ENCODE measurements at regions of chr17 and their contacts with region 1.

Region 1: DNA sequence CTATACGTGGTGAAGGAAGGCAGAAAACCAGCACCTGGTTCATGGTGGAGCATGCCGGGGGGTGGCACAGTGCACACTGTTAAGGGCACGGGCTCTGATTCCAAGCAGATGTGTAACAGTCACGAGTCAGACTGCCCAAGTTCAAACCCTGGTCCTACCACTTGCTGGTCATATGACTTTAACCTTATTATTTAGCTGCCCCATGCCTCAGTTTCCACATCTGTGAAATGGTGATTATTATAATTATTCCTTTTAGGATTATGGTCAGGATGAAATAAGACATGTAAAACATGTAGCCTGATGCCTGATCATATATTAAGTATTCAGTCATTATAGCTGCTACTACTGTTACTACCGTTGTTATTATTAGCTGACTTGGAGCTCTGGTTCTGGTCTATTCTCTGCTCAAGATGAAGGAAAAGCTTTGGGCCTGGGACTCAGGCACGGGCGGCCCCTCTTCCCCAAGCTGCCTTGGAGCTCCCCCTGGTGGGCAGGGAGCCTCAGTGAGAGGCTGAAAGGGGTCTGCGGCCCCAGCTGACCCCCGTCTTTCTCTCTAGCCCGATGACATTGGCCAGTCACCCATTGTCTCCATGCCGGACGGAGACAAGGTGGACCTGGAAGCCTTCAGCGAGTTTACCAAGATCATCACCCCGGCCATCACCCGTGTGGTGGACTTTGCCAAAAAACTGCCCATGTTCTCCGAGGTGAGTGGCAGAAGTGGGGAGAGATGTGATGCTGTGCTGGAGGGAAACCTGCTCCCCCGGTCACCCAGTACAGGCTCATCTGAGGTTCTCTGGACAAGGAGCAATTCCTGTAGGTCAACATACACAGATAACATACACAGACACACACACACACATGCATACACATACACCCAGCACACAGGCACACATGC is 14.0 kb downstream of the NR1D1 start:
- DNase-seq: peak; percentile 40
- H3K4me3 ChIP-seq: no peak overlapping the region
- H3K27ac ChIP-seq: no peak overlapping the region
- H3K4me1 ChIP-seq: no peaks in the 10 kb centered on the region
- H3K27me3 ChIP-seq: no peaks in the 10 kb centered on the region
- CTCF ChIP-seq: peak; percentile 80 to 89
- POLR2A ChIP-seq: no peak

Region 2: GRCh38 chr17:40015005-40015997 is 71.1 kb before region 1 on chr17 and contains the start of gene CSF3:
- CTCF ChIA-PET with region 1: interaction called, 15 read pairs
- POLR2A ChIA-PET with region 1: no interaction called
- dilution Hi-C with region 1: no loop called
- intact Hi-C with region 1: loop called (anchors 1 kb)
- DNase-seq: peak; percentile 31
- H3K4me3 ChIP-seq: peak within 1 kb of the TSS in 1 of 3 experiments; percentile 5
- H3K27ac ChIP-seq: peak within 1 kb of the TSS; percentile 88
- H3K4me1 ChIP-seq: peaks cover 56% of the 10 kb centered on the region
- H3K27me3 ChIP-seq: no peaks in the 10 kb centered on the region
- CTCF ChIP-seq: no peak
- POLR2A ChIP-seq: no peak
- total RNA-seq, gene CSF3: 2.4 and 2.9 TPM in 2 replicates

Region 3: GRCh38 chr17:40021451-40021971 is 64.9 kb before region 1 on chr17:
- CTCF ChIA-PET with region 1: interaction called, 15 read pairs
- POLR2A ChIA-PET with region 1: no interaction called
- dilution Hi-C with region 1: no loop called
- intact Hi-C with region 1: loop called (anchors 1 kb)
- DNase-seq: peak; percentile 80
- H3K4me3 ChIP-seq: peak overlapping the region in 1 of 3 experiments; percentile 14
- H3K27ac ChIP-seq: peak overlapping the region; percentile 99
- H3K4me1 ChIP-seq: peaks cover 90% of the 10 kb centered on the region
- H3K27me3 ChIP-seq: no peaks in the 10 kb centered on the region
- CTCF ChIP-seq: no peak
- POLR2A ChIP-seq: peak; percentile 73

Region 4: DNA sequence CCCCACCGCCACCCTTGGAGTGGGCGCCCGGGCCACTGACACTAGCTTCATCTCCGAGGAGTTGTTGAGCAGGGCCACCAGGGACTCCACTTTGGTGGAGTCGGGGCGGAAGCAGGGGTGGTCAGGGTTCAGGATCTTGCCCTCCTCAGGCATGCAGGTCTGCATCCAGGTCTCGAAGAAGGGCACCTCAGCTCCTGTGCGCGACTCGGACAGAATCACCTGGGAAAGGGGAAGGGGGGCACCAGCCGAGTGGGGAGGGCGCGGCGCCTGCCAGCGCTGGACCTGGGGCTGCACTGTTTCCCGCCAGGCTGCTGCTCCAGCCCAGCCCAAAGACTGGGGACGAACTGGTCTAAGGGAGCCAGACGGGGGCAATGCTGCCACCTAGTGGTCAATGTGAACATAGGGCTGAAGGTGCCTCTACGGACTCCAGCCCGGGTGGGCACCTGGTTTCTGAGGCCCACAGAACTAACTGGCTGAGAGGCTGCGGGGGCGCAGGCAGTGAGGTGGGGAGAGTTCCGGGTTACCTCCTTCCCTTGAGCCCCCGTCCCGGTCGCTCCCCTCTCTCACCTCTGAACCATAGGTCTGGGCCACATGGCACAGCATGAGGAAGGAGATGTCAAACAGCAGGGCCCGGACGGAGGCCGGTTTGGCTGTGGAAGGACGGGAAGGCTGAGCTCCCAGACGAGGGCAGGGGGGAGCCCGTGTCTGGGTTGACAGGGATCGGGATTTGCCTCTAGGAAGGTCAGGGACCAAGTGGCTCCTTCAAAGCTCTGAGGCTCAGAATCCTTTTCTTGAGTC is 59.4 kb before region 1 on chr17:
- CTCF ChIA-PET with region 1: interaction called, 15 read pairs
- POLR2A ChIA-PET with region 1: no interaction called
- dilution Hi-C with region 1: no loop called
- intact Hi-C with region 1: loop called (anchors 1 kb)
- DNase-seq: peak; percentile 74
- H3K4me3 ChIP-seq: no peak overlapping the region
- H3K27ac ChIP-seq: peak overlapping the region; percentile 99
- H3K4me1 ChIP-seq: peaks cover 48% of the 10 kb centered on the region
- H3K27me3 ChIP-seq: no peaks in the 10 kb centered on the region
- CTCF ChIP-seq: peak; percentile 81 to 93
- POLR2A ChIP-seq: no peak

Region 5: DNA sequence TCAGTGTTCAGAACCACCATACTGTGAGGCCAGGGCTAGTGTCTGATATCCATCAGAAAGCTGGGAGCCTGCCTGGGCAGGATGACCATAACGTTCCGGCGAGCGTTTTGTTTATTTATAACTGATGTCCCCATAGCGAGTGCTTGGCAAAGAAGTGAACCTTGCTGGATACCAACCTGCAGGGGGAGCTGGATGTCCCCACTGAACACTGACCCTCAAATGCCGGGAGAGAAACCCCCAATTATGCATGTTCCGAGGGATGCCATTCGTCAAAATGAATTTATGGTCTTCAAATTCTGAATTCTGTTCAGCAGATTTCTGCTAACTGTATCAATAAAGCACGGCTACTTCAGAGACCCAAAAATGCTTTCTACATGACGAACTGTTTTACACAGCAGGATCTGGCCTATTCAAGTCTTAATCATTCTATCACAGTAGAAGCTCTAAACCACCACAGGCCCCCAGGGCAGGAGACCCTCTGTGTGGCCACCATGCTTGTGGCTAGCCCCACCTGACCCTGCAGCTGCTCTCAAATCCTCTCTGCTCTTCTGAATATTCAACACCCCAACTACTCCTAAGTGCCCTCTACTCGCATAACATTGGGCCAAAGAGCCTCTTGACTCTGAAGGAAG is 47.4 kb before region 1 on chr17:
- CTCF ChIA-PET with region 1: interaction called, 43 read pairs
- POLR2A ChIA-PET with region 1: interaction called, 4 read pairs
- dilution Hi-C with region 1: no loop called
- intact Hi-C with region 1: loop called (anchors 1 kb)
- DNase-seq: peak; percentile 84
- H3K4me3 ChIP-seq: no peak overlapping the region
- H3K27ac ChIP-seq: peak overlapping the region; percentile 27
- H3K4me1 ChIP-seq: peaks cover 5% of the 10 kb centered on the region
- H3K27me3 ChIP-seq: no peaks in the 10 kb centered on the region
- CTCF ChIP-seq: peak; percentile 74 to 85
- POLR2A ChIP-seq: peak; percentile 28

Region 6: DNA sequence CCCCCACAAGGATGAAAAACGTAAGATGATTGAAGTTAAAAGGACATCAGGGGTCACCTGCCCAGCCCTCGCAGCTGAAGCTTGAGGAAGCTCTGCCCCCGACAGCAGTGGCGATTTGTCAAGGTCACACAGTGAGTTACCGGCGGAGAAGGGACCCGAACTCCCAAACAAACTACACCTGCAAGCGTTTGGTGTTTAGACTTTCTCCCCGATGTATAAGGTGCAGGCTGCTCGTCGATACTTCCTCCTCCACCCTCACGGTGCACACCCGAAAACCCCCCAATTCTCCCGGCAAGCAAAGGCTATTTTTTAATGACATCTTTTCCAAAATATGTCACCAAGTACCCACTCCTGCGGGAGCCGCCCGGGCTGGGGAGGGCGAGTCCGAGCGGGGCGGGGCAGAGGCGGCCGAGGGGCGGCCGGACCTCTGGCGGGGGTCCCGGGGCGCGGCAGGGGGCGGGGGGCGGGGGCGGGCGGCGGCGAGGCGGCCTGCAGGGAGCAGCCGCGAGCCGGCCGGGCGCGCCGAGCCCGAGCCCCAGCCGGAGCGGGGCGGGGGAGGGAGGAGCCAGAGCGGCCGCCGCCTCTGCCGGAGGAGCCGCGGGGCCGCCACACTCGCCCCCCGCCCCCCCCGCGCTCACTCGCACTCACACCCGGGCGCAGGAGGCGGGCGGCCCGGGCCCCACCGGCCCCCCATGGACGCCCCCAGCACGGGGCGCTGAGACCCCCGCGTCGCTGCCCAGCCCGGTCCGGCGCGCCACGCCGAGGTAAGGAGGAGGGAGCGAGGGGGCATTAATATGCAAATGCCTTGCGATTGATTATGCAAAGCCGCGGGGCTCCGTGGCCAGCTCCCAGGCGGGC is 23.8 kb before region 1 on chr17 and contains the start of gene THRA:
- CTCF ChIA-PET with region 1: interaction called, 34 read pairs
- POLR2A ChIA-PET with region 1: no interaction called
- dilution Hi-C with region 1: no loop called
- intact Hi-C with region 1: loop called (anchors 2 kb)
- DNase-seq: peak; percentile 67
- H3K4me3 ChIP-seq: peak within 1 kb of the TSS; percentile 48 to 96 (median 86)
- H3K27ac ChIP-seq: no peak within 1 kb of the TSS
- H3K4me1 ChIP-seq: peaks cover 16% of the 10 kb centered on the region
- H3K27me3 ChIP-seq: peaks cover 0 to 3% of the 10 kb centered on the region in 2 experiments
- CTCF ChIP-seq: no peak
- POLR2A ChIP-seq: no peak
- total RNA-seq, gene THRA: 24.9 and 29.6 TPM in 2 replicates

Region 7: DNA sequence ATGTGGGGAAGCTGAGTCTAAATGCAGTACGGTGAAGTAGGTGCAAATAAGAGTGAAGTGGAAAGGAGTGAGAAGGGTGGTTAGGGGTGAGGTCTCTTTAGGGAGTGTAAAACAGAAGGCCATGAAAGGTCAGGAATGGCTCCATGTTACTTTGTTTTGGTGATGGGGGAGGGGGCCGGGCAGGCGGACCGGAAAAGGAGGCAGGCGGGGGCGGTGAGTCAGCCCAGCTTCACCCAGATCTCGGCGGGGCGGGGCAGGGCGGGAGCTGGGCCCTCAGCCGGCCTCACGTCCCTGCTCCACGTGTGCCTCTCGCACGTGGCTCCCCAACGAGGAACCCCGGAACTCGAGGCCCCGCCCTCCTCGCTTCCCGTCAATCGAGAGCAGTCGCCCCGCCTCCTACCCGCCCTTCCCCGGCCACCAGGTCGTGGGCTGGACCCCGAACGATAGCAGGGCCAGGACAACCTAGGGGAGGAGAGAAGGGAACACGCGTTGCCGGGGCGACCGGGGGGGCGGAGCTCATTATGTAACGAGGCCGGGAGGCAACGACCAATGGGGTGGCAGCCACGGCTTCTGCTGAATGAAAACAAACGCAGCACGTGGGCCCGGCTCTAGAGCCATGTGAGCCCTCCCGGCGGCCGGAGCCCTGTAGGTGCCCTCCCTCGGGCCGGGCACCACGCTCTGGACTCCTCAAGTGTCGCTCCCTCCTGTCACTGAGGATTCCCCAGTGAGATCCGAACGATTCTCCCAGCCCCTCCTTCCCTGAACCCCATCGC is 12.6 kb after region 1 on chr17:
- CTCF ChIA-PET with region 1: interaction called, 26 read pairs
- POLR2A ChIA-PET with region 1: no interaction called
- dilution Hi-C with region 1: no loop called
- intact Hi-C with region 1: no loop called
- DNase-seq: peak; percentile 97
- H3K4me3 ChIP-seq: peak overlapping the region; percentile 26 to 60 (median 48)
- H3K27ac ChIP-seq: peak overlapping the region; percentile 77
- H3K4me1 ChIP-seq: peaks cover 39% of the 10 kb centered on the region
- H3K27me3 ChIP-seq: no peaks in the 10 kb centered on the region
- CTCF ChIP-seq: no peak
- POLR2A ChIP-seq: peak; percentile 53

Measured in endothelial cell of umbilical vein (primary cell).